ENCODE measurements at regions of chr14 and their contacts with region 1.

Region 1: GRCh38 chr14:35046048-35046741 is at the start of gene FAM177A1:
- DNase-seq: peak; percentile 99
- ATAC-seq: peak; percentile 97
- H3K4me3 ChIP-seq: peak within 1 kb of the TSS; percentile 81 to 96 (median 90)
- H3K27ac ChIP-seq: peak within 1 kb of the TSS; percentile 82
- H3K4me1 ChIP-seq: peaks cover 52% of the 10 kb centered on the region
- H3K27me3 ChIP-seq: no peaks in the 10 kb centered on the region; a peak in 1 of 5 replicates
- CTCF ChIP-seq: peak; percentile 48
- EP300 ChIP-seq: peak in 1 of 2 experiments; percentile 44; a peak in 2 of 4 replicates
- POLR2A ChIP-seq: peak; percentile 93 to 96
- RAD21 ChIP-seq: peak; percentile 72
- total RNA-seq, gene FAM177A1: 116 and 119 TPM in 2 replicates

Region 2: GRCh38 chr14:34379816-34380463 is 666.3 kb before region 1 on chr14:
- CTCF ChIA-PET with region 1: no interaction called
- POLR2A ChIA-PET with region 1: no interaction called
- in situ Hi-C with region 1: no loop called
- intact Hi-C with region 1: no loop called
- DNase-seq: no peak
- ATAC-seq: peak; percentile 49
- H3K4me3 ChIP-seq: 0 out of 6 replicates have a peak overlapping the region, but pooled peaks of 1 of the 3 experiments have one; percentile 3
- H3K27ac ChIP-seq: no peak overlapping the region
- H3K4me1 ChIP-seq: peaks cover 14% of the 10 kb centered on the region
- H3K27me3 ChIP-seq: no peaks in the 10 kb centered on the region; a peak in 1 of 5 replicates
- CTCF ChIP-seq: no peak
- EP300 ChIP-seq: no peak; a peak in 1 of 4 replicates
- POLR2A ChIP-seq: no peak
- RAD21 ChIP-seq: no peak

Region 3: DNA sequence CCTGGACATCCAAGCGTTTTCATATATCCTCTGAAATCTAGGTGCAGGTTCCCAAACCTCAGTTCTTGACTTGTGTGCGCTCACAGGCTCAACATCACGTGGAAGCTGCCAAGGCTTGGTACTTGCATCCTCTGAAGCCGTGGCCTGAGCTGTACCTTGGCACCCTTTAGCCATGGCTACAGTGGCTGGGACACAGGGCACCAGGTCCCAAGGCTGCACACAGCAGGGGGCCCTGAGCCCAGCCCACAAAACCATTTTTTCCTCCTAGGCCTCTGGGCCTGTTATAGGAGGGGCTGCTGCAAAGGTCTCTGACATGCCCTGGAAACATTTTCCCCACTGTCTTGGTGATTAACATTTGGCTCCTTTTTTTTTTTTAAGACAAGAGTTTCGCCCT is 11.8 kb before region 1 on chr14:
- CTCF ChIA-PET with region 1: no interaction called
- POLR2A ChIA-PET with region 1: interaction called, 46 read pairs
- in situ Hi-C with region 1: no loop called
- intact Hi-C with region 1: no loop called
- DNase-seq: no peak
- ATAC-seq: peak; percentile 15
- H3K4me3 ChIP-seq: no peak overlapping the region
- H3K27ac ChIP-seq: peak overlapping the region; percentile 34
- H3K4me1 ChIP-seq: peaks cover 22% of the 10 kb centered on the region
- H3K27me3 ChIP-seq: no peaks in the 10 kb centered on the region
- CTCF ChIP-seq: no peak
- EP300 ChIP-seq: no peak
- POLR2A ChIP-seq: no peak
- RAD21 ChIP-seq: no peak

Region 4: GRCh38 chr14:35078082-35078481 is 31.9 kb after region 1 on chr14:
- CTCF ChIA-PET with region 1: no interaction called
- POLR2A ChIA-PET with region 1: interaction called, 28 read pairs
- in situ Hi-C with region 1: no loop called
- intact Hi-C with region 1: loop called (anchors 1 kb)
- DNase-seq: peak; percentile 83
- ATAC-seq: peak; percentile 94
- H3K4me3 ChIP-seq: no peak overlapping the region
- H3K27ac ChIP-seq: no peak overlapping the region
- H3K4me1 ChIP-seq: peaks cover 13% of the 10 kb centered on the region
- H3K27me3 ChIP-seq: no peaks in the 10 kb centered on the region
- CTCF ChIP-seq: no peak
- EP300 ChIP-seq: peak in 1 of 2 experiments; percentile 47; a peak in 1 of 4 replicates
- POLR2A ChIP-seq: no peak
- RAD21 ChIP-seq: 0 out of 2 replicates have a peak, but pooled peaks have one; percentile 18

Region 5: DNA sequence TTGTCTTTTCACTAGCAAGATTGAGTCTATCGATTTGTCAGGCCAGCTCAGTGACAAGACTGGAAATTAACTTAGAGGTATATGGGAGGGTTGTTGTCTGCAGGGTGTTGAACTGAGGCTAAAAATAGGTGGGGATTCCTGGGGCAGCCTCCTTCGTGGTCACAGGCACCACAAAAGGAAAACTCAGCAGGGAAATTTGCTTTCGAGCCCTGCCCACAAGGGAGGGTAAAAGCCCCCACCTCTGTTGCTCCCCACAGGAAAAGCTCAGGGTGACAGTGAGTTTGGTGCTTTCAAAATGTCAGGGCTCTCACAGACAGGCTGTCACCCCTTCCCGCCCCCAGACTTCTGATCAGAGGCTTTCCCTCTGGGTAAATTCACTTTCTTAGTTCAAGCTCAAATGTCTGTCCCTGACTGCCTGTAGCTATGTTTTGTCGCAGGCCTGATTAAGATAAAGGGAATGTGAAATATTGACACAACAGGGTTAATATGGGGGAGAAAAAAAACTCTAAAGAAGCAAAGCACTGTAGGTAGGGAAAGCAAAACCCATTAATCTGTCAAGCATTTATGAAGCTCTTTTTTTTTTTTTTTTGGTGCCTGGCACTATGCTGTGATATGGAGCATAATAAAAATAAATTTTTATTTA is 370.0 kb after region 1 on chr14:
- CTCF ChIA-PET with region 1: no interaction called
- POLR2A ChIA-PET with region 1: no interaction called
- in situ Hi-C with region 1: loop called (anchors 5 kb)
- intact Hi-C with region 1: no loop called
- DNase-seq: no peak
- ATAC-seq: no peak
- H3K4me3 ChIP-seq: peak overlapping the region in 1 of 3 experiments; percentile 14; a peak in 1 of 6 replicates
- H3K27ac ChIP-seq: no peak overlapping the region
- H3K4me1 ChIP-seq: peaks cover 73% of the 10 kb centered on the region
- H3K27me3 ChIP-seq: peaks cover 4 to 12% of the 10 kb centered on the region in 2 experiments; a peak in 3 of 5 replicates
- CTCF ChIP-seq: no peak
- EP300 ChIP-seq: no peak
- POLR2A ChIP-seq: no peak
- RAD21 ChIP-seq: no peak